CD14-positive monocyte (primary cell): ENCODE measurements at regions of chr6 and their contacts with region 1.

Region 1: DNA sequence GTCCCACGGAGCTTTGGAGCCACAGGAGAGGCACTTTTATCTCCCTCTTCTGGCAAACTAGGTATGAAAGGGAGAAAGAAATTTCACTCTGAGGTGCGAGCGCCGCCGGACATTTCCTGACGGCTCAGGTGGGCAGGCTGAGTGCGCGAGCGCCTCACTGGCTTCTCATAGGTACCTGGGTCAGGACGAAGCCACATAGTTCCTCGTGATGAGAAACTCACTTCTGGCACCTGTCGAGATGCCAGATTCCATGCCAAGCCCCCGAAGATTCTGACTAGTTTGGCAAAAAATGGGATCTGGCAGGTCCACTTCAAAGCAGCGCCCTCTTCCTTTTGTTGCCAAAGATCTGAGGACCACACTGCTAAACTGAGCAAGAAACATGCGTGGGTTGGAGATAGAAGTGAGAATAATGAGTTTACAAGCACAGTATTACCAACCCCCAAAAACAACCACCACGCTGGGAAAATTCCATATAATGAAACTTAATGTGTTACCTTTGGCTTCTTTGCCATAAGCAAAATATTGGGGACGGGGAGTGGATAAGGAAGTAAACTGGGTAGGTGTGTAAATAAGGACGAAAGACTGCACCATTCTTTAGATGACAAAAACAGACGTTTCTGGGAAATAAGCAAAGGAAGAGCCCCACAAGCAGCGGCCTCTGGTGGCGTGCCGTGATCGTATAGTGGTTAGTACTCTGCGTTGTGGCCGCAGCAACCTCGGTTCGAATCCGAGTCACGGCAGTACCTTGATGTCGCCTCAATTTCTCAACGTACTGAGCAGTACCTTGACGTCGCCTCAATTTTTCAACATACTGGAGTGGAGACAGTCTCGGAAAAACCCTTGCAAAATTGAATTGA is 89.8 kb upstream of the PRSS16 start:
- DNase-seq: peak; percentile 61 to 79 (median 74)
- H3K4me3 ChIP-seq: peak overlapping the region; percentile 32 to 67 (median 33)
- H3K4me3 Mint-ChIP-seq: peak overlapping the region; percentile 78 to 91
- H3K27ac ChIP-seq: no peak overlapping the region
- H3K27ac Mint-ChIP-seq: peak overlapping the region in 1 of 7 donors; percentile 73
- H3K4me1 ChIP-seq: peaks cover 16% of the 10 kb centered on the region in 2 donors
- H3K4me1 Mint-ChIP-seq: peaks cover 23% of the 10 kb centered on the region
- H3K27me3 ChIP-seq: no peaks in the 10 kb centered on the region
- H3K27me3 Mint-ChIP-seq: peaks cover 0 to 8% (median 7%) of the 10 kb centered on the region in 3 donors
- CTCF ChIP-seq: peak; percentile 65

Region 2: DNA sequence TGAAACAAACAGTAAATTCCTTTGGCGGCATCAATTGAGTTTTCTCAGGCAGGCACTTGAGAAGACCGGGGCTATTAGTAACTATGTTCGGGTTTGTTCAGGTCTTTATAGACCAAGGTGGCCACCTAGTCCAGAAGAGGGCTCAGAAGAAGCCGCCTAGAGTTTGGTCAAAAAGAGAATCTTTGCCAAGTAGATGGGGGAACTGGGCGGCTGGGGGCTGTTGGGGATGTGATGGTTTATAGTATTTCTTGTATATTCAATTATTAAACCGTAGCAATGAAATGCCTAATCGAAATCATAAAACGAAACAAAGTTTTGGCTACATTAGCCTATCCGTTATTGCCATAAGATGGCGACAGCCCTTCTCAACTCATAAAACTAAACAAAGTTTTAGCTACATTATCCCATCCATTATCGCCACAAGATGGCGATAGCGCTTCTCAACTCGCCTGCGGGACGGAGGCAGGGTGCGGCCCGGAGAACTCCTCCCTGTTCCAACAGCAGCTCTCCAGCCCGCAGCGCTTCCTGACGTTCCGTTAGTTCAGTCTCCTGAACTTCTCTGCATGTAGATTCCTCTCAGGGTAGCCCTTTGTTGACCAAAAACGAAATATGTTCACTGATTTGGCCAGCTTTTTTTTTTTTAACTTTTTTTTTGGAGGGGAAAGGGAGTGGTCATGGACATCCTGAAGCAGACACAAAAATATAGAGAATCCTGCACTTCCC is 30.7 kb before region 1 on chr6:
- intact Hi-C with region 1: loop called in 1 of 2 experiments (anchors 1 kb)
- DNase-seq: peak; percentile 83 to 88 (median 84)
- H3K4me3 ChIP-seq: peak overlapping the region; percentile 31 to 65 (median 36)
- H3K4me3 Mint-ChIP-seq: peak overlapping the region; percentile 76 to 89
- H3K27ac ChIP-seq: no peak overlapping the region
- H3K27ac Mint-ChIP-seq: peak overlapping the region; percentile 19 to 79 (median 60)
- H3K4me1 ChIP-seq: peaks cover 12 to 26% of the 10 kb centered on the region in 2 donors
- H3K4me1 Mint-ChIP-seq: peaks cover 13% of the 10 kb centered on the region
- H3K27me3 ChIP-seq: no peaks in the 10 kb centered on the region
- H3K27me3 Mint-ChIP-seq: peaks cover 0 to 4% (median 4%) of the 10 kb centered on the region in 3 donors
- CTCF ChIP-seq: peak; percentile 83

Region 3: DNA sequence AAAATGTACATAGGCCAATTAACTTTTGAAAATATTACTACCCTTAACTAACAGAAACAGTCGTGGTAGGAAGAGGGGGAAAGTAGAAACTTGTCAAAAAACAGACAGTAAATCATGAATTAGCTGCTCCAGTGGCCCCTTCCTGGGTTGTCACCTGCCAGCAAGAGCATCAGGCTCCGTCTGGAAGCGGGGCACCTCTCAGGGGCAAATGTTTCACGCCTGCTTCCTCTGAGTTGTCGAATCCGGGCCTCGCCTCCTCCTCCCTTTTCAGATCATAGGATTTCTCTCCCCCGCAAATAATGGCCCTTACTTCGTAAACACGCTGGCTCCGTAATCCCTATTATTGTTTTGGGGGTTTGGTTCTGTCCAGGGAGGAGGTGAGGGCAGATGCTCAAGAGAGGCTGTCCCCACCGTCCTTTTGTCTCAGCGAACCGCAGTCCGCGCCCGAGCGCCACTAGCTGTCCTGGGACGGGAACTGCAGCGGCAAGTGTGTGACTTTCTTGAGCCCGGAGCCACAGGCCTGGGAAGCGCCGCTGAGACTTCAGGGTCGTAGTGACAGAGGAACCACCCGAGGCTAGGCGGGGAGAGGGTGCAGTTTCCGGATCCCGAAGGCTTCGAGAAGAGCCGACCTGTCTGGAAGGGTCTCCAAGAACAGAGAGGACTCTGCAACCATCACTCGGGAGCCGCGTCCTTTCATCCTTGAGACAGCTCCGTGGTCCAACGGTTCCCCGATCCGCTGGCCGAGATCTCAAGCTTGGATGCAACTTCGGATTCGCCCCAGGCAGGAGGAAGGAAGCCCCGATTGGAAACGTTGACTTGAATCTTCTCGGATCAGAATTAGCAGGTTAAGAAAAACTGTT is 529.7 kb after region 1 on chr6:
- intact Hi-C with region 1: loop called in 1 of 2 experiments (anchors 10 kb)
- DNase-seq: peak; percentile 51 to 62 (median 57)
- H3K4me3 ChIP-seq: peak overlapping the region; percentile 31 to 80 (median 47)
- H3K4me3 Mint-ChIP-seq: peak overlapping the region; percentile 93 to 95
- H3K27ac ChIP-seq: no peak overlapping the region
- H3K27ac Mint-ChIP-seq: peak overlapping the region in 2 of 7 donors; percentile 20 to 42
- H3K4me1 ChIP-seq: peaks cover 13 to 15% of the 10 kb centered on the region in 2 donors
- H3K4me1 Mint-ChIP-seq: peaks cover 18% of the 10 kb centered on the region
- H3K27me3 ChIP-seq: peaks cover 8 to 64% of the 10 kb centered on the region in 2 donors
- H3K27me3 Mint-ChIP-seq: peaks cover 54 to 73% (median 58%) of the 10 kb centered on the region in 3 donors
- CTCF ChIP-seq: peak; percentile 72